Cardiac septum (tissue), 1 donor: ENCODE measurements at regions of chr11 and their contacts with region 1.

Region 1: DNA sequence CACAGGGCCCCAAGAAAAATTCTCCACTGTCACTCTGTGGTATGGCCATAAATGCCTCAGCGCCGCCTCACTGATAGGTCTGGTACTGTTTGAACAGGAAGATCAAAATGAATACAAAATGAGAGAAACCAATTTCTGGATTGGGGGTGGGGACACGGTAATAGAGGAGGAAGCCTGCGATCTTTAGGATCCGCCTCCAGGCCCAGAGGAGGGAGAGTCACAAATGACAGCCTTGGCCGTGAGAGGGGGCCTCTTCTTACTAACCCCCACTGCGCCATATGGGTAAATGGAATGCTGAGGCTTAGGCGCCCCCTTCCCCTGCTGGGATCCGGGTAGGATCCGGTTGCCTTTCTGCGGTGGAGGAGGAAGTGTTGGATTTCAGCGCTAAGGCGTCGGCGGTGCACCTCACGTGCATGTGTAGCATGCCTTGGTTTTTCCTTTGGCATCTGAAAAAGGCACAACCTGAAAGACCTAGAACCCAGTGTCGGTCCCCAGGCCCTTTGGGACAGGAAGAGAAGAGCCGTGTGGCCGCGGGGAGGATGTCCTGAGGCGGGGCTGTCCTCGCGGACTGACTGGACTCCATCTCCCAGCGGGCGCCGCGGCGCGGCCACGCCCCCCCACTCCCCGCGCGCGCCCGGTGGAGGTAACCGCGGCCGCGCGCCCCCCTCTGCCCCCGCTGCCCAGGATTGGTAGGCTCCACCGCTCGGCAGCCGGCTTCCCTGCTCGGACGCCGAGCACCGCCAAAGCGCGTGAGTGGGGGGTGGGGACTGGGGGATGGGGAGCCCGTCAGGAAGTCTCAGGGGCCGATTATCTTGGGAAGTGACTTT is 718 bp upstream of the MADD start:
- DNase-seq: peak; percentile 92

Region 2: DNA sequence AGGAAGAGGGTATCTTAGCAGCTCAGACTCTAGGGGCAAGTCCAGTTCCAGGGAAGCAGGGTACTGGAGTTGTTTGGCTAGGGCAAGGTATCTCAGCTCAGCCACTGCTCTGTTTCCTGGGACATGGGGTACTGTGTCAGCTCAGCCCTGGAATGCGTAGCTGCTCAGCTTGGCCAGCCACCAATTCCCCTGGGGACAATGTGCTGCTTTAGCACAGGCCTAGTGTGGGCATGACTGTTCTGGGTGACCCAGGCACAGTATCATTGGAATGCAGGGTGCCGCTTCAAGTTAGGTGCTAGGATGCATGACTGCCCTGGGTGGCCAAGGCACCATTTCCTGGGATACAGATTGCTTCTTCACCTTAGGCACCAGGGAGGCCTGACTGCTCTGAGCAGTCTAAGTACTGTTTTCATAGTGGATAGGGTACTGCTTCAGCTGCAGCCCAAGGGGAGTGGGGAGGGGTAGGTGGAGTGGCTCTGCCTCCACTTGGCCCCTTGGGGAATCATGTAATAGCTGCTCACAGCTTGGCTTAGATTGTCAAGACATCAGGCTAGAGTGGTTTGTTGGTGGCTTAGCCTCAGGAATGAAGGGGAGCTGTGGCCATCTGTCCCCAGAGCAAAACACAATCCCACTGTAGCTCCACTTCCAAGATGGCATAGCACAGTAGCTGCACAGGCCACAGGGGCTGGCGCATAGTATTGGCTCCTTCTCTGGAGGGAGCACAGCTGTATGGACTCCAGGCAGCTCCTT is 36.7 kb after region 1 on chr11:
- intact Hi-C with region 1: loop called (anchors 5 kb)
- DNase-seq: peak; percentile 86

Region 3: DNA sequence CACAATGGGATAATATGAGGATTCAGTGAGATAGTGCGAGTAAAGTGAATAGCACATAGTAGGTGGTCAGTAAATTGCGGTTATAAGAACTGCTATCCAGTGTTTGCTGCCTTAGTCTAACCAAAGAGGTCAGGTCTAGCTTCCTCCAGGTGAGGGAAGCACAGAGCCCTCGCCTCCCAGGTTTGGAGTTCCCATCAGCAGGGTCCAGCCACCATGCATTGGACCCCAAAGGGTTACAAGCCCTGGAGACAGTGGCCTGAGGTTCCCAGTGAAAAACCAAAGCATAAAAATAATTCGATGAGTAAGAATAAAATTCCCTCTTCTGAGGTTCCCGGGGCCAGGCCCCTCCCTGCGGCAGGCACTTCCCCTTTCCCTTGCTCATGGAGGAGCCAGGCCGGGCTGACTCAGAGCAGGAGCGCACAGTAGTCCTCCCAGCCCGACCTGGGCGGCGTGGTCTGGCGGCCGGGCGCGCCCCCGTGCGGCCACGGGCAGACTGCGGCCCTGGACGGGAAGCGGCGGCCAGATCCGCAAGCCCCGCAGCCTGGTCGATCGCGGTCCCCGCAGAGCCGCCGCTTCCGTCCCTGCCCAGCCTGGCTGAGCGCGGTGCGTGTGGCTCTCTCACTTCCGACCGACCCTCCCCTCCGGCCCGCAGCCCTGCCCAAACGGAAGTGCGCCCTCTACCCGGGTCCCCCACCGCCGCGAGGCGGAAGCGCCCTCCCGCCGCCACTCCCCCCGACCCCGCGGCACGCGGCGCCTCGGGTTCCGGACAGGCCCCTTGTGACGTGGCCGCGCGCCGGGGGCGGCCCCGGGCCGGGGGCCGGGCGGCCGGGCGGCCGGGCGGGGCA is 138.8 kb after region 1 on chr11 and contains the start of gene SLC39A13:
- intact Hi-C with region 1: loop called (anchors 2 kb)
- DNase-seq: peak; percentile 98
- total RNA-seq, gene SLC39A13: 72.2 TPM